ENCODE measurements at regions of chr11 and their contacts with region 1.

Region 1: GRCh38 chr11:67583247-67584204 is at the start of gene GSTP1:
- DNase-seq: peak; percentile 52 to 85 (median 68)
- ATAC-seq: peak; percentile 78 to 90
- H3K4me3 Mint-ChIP-seq: peak within 1 kb of the TSS; percentile 82 to 93 (median 90)
- H3K27ac Mint-ChIP-seq: peak within 1 kb of the TSS; percentile 80 to 94 (median 91)
- H3K4me1 Mint-ChIP-seq: peaks cover 26 to 74% (median 50%) of the 10 kb centered on the region in 4 donors
- H3K27me3 Mint-ChIP-seq: peaks cover 0 to 8% (median 4%) of the 10 kb centered on the region in 5 donors
- polyA plus RNA-seq, gene GSTP1: 234 to 278 (median 276) TPM

Region 2: GRCh38 chr11:67613960-67614715 is 30.6 kb after region 1 on chr11:
- POLR2A ChIA-PET with region 1: interaction called, 12 read pairs
- DNase-seq: peak; percentile 68 to 88 (median 80)
- ATAC-seq: peak; percentile 87 to 94
- H3K4me3 Mint-ChIP-seq: peak overlapping the region; percentile 68 to 88 (median 84)
- H3K27ac Mint-ChIP-seq: peak overlapping the region; percentile 94 to 99 (median 97)
- H3K4me1 Mint-ChIP-seq: peaks cover 13 to 41% (median 33%) of the 10 kb centered on the region in 4 donors
- H3K27me3 Mint-ChIP-seq: no peaks in the 10 kb centered on the region

Measured in naive thymus-derived CD8-positive, alpha-beta T cell (primary cell).